ENCODE measurements at regions of chr1 and their contacts with region 1.

Region 1: DNA sequence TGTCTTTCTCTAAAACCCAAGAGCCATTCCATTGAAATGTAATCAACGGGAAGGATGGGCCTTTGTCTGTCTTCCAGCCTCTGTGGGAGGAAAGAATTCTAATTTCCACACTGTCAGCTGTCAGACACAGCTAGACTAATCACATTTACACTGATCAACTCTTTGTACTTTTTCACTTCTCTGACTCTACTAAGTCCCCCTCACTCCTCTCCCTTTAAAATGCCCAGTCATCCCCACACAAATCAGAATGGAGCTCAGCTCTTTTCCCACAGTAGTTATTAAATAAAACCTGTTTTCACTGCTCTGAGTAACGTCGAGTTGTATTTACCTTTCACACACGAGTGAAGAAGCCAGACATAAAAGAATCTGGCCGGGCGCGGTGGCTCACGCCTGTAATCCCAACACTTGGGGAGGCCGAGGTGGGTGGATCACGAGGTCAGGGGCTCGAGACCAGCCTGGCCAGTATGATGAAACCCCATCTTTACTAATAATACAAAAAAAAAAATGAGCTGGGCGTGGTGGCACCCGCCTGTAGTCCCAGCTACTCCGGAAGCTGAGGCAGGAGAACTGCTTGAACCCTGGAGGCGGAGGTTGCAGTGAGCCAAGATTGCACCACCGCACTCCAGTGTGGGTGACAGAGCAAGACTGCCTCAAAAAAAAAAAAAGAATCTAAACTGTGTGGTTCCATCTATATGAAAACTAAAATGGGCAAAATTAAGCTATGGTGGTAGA is 13.3 kb downstream of the ZBTB8OS start:
- DNase-seq: no peak
- ATAC-seq: no peak
- H3K4me3 Mint-ChIP-seq: no peak overlapping the region
- H3K27ac Mint-ChIP-seq: no peak overlapping the region
- H3K4me1 Mint-ChIP-seq: peaks cover 4% of the 10 kb centered on the region
- H3K27me3 Mint-ChIP-seq: no peaks in the 10 kb centered on the region
- CTCF ChIP-seq: no peak

Region 2: GRCh38 chr1:32684167-32684811 is 47.2 kb after region 1 on chr1:
- CTCF ChIA-PET with region 1: no interaction called
- POLR2A ChIA-PET with region 1: interaction called, 11 read pairs
- intact Hi-C with region 1: no loop called
- DNase-seq: no peak
- ATAC-seq: no peak
- H3K4me3 Mint-ChIP-seq: no peak overlapping the region
- H3K27ac Mint-ChIP-seq: no peak overlapping the region
- H3K4me1 Mint-ChIP-seq: no peaks in the 10 kb centered on the region
- H3K27me3 Mint-ChIP-seq: no peaks in the 10 kb centered on the region
- CTCF ChIP-seq: no peak

Measured in activated B cell treated with CpG ODN at 0.5 μM for 24 hours (primary cell).